Colonic mucosa (tissue), 4 donors: ENCODE measurements at regions of chr6 and their contacts with region 1.

Region 1: DNA sequence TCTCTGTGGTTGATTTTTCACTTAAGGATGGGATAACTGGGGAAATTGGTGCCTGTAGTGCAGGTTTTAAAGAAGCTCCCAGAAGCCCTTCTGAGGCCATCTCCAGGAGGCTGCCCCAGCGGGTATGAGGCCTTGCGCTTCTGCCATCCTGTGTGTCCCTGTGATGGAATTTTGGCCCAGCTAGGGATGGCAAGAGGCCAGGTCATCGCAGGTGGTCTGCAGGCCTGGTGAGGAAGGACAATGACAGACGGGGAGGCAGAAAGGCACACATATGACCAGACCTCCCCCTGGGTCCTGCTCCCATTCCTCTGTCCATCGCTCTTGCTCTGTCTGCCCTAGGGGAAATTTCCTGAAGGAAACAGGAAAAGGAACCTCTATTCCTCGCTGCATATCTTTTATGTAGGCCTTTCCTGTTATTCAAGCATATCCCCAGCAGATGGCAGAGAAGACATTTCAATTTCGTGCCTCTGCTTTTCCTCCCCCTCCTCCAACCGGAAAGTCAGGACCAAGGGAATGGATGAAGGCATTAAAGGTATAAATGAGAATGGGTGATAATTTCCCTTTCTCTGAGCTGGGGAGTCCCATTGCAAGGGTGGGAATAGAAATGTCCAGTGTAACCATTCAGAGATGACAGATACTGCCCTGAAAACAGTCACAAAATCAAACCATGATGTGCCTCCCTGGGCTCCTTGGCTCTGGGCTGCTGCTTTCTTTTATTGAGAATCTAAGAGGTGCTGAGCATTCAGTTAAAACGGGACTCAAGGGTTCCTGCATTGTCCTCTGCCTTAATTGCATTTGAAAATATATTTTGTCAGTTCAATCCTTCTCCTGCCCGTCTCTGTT is 17.6 kb upstream of the HLA-F start:
- DNase-seq: peak; percentile 49
- H3K4me3 ChIP-seq: no peak overlapping the region
- H3K27ac ChIP-seq: no peak overlapping the region
- H3K4me1 ChIP-seq: no peaks in the 10 kb centered on the region
- H3K27me3 ChIP-seq: no peaks in the 10 kb centered on the region
- CTCF ChIP-seq: peak; percentile 53

Region 2: DNA sequence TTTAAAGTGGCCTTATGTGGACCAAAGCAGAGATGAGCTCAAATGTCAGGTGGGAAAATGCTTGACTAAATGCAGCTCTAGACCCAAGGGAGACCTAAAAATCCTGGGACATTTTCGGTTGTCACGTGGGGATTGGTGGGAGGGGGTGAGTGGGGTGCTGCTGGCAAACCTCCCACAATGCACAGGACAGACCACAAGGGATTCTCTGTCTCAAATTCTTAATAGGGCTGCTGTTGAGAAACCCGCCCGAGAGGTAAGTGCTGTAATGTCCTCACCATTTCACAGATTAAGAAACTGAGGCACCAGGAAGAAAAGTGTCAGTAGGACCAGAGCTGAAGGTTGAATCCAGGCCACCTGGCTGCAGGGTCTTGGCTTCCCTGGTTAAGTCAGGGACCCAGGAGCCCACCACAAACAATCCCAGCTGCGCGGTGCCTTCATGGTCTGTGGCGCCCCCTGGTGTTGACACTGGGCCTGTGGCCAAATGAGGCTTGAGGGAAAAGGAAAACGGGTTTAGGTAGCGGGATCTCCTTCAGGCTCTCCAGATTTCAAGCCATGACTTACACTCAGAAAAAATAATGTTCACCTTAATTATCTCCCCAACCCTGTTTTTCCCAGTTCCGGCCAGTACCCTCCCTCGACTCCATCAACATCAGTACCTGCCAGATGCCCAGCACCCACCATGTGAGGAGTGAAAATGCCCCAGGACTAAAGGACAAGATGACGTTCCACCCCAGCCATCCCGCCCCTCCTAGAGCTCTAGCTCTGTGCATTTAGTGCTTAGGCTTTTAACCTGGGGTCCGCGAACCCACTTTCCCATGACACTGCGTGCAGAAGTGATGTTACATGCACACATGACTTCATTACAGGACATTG is 129.2 kb after region 1 on chr6:
- intact Hi-C with region 1: loop called (anchors 10 kb)
- DNase-seq: peak; percentile 56
- H3K4me3 ChIP-seq: no peak overlapping the region
- H3K27ac ChIP-seq: no peak overlapping the region
- H3K4me1 ChIP-seq: no peaks in the 10 kb centered on the region
- H3K27me3 ChIP-seq: no peaks in the 10 kb centered on the region
- CTCF ChIP-seq: peak; percentile 84

Region 3: DNA sequence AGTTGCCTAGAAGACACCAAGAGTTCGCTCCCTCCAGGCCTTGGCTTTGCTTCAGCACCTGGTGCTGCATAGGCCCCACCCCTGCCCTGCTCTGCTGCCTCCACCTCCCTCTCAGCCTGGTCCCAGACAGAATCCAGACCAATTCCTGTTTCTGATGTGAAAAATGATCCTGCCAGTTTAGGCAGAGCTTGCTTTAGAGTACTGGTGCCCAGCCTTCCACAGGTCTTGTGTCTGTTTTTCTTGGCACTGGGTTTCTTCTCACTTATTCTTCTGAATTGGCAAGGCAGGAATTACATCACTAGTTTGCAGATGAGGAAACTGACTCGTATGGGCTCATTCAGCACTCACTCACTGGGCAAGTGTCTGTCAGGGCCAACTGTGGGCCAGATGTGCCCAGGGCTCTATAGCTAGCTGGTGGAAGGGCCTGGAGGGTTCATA is 289.7 kb after region 1 on chr6:
- intact Hi-C with region 1: no loop called
- DNase-seq: no peak
- H3K4me3 ChIP-seq: no peak overlapping the region
- H3K27ac ChIP-seq: no peak overlapping the region
- H3K4me1 ChIP-seq: no peaks in the 10 kb centered on the region
- H3K27me3 ChIP-seq: no peaks in the 10 kb centered on the region
- CTCF ChIP-seq: no peak

Region 4: GRCh38 chr6:30013291-30013922 is 307.8 kb after region 1 on chr6:
- intact Hi-C with region 1: loop called (anchors 10 kb)
- DNase-seq: no peak
- H3K4me3 ChIP-seq: no peak overlapping the region
- H3K27ac ChIP-seq: no peak overlapping the region
- H3K4me1 ChIP-seq: no peaks in the 10 kb centered on the region
- H3K27me3 ChIP-seq: no peaks in the 10 kb centered on the region
- CTCF ChIP-seq: peak; percentile 90

Region 5: GRCh38 chr6:30212865-30213666 is 507.5 kb after region 1 on chr6 and contains the start of gene TRIM26:
- intact Hi-C with region 1: no loop called
- DNase-seq: peak; percentile 98
- H3K4me3 ChIP-seq: peak within 1 kb of the TSS; percentile 91
- H3K27ac ChIP-seq: peak within 1 kb of the TSS; percentile 91
- H3K4me1 ChIP-seq: peaks cover 8% of the 10 kb centered on the region
- H3K27me3 ChIP-seq: no peaks in the 10 kb centered on the region
- CTCF ChIP-seq: no peak
- total RNA-seq, gene TRIM26: 48.2 to 53.5 TPM